Aorta (tissue), 5 donors: ENCODE measurements at regions of chr9 and their contacts with region 1.

Region 1: GRCh38 chr9:34178520-34179212 is at the start of gene UBAP1:
- DNase-seq: peak; percentile 98 to 99
- ATAC-seq: peak; percentile 99
- H3K4me3 ChIP-seq: peak within 1 kb of the TSS; percentile 70 to 79
- H3K27ac ChIP-seq: peak within 1 kb of the TSS; percentile 19 to 72
- H3K4me1 ChIP-seq: peaks cover 0 to 2% of the 10 kb centered on the region in 2 donors
- H3K27me3 ChIP-seq: no peaks in the 10 kb centered on the region
- total RNA-seq, gene UBAP1: 39.3 to 41.9 TPM

Region 2: DNA sequence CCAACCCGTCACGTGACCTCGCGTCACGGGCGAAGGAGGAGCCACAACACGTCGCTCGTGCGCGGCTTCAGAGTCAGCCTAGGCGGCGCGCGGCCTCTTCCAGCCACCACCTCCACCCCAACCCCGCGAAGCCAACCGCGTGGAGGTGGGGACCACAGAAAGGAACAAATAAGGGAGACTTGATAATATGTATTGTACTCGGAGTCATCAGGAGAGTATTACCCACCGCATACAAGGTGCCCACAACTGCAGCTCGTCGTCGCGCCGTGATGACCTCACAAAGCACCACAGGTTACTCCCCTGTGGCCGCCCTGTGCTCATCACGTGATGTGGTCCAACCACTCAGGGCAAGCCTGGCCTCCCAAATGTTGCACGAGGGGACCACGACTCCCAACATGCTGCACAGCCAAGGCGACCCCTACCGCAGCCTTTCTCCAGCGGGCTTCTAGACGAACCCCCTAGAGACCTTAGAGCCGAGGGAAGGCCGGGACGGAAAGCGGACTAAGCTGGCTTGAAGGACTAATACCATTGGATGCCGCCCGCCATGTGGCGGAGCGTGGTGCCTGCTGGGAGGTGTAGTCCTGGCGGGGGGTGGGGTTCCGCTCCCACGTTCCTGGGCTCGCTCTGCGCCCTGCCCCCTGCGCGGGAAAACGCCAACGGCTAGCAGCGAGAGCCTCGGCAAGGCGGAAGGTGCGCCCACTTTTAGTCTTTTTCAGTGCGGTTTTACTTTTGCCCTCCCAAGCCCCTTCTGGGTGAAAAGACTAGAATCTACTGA is 129.6 kb before region 1 on chr9:
- intact Hi-C with region 1: loop called in 1 of 2 experiments (anchors 5 kb)
- DNase-seq: peak; percentile 99 to 100
- ATAC-seq: peak; percentile 98
- H3K4me3 ChIP-seq: peak overlapping the region in 1 of 2 donors; percentile 54
- H3K27ac ChIP-seq: peak overlapping the region in 1 of 2 donors; percentile 87
- H3K4me1 ChIP-seq: no peaks in the 10 kb centered on the region
- H3K27me3 ChIP-seq: no peaks in the 10 kb centered on the region

Region 3: DNA sequence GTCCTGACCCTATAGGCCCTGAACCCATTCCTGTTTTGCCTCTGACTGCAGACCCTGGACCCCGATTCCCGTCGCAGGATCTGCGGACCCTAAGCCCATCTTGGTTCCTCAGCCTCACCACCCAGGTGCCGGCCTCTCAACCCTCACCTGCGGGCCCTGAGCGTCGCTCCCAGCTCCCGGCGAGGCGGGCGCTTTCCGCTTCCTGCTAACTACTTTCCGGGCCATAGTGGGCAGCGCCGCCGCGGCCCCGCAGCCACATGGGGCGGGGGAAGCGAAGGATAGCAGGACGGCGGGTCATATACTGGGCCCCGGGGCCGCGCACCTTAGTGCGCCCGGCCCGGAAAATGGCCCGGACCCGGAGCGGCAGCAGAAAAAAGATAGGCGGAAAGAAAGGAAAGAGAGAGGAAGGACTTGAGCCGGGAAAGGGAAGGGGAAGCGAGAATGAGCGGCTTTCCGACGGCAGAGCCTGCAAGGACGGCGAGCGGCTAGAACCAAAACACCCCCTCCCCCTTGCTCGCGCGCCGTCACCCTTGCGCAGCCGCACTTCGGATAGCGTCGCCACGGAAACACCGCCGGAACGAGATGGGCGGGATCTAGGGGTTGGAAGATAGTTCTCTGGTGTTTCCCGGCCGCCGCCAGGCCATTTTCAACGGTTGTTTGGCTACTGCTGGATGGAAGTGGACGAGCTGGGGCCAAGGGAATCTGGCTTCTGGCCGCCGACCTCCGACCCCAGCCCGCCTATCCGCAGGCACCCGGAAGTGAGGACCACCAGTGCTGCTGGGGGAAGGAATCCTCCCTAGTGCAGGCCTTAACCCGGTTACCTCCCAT is 52.2 kb before region 1 on chr9 and contains the start of gene DCAF12:
- intact Hi-C with region 1: loop called (anchors 5 kb)
- DNase-seq: peak; percentile 95 to 97
- ATAC-seq: peak; percentile 98
- H3K4me3 ChIP-seq: peak within 1 kb of the TSS; percentile 74 to 91
- H3K27ac ChIP-seq: peak within 1 kb of the TSS; percentile 20 to 79
- H3K4me1 ChIP-seq: no peaks in the 10 kb centered on the region
- H3K27me3 ChIP-seq: no peaks in the 10 kb centered on the region
- total RNA-seq, gene DCAF12: 20.6 to 35.2 TPM

Region 4: DNA sequence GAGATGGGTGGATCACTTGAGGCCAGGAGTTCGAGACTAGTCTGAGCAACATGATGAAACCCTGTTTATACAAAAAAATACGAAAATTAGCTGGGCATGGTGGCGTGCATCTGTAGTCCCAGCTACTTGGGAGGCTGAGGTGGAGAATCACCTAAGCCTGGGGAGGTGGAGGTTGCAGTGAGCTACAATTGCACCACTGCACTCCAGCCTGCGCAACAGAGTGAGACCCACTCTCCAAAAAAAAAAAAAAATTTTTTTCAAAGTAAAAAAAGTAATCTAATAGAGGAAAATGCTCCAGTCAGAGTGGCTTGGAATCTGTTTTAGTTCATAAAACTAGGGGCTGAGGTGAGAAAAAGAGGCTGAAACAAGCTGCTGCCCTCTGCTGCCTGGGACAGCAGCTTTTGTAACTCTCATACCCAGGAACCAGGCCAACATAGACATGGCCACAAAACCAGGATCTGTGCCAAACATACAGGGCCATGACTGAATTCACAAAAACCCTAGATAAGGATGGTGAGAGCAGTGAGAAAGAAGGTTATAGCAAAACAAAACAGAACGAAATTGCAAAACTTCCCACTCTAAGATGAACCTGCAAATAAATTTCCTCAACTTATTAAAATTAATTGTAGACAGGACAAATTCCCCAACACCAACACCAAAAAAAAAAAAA is 39.1 kb before region 1 on chr9:
- intact Hi-C with region 1: loop called in 1 of 2 experiments (anchors 2 kb)
- DNase-seq: peak in 1 of 2 donors; percentile 59
- ATAC-seq: peak; percentile 84
- H3K4me3 ChIP-seq: no peak overlapping the region
- H3K27ac ChIP-seq: no peak overlapping the region
- H3K4me1 ChIP-seq: no peaks in the 10 kb centered on the region
- H3K27me3 ChIP-seq: no peaks in the 10 kb centered on the region

Region 5: DNA sequence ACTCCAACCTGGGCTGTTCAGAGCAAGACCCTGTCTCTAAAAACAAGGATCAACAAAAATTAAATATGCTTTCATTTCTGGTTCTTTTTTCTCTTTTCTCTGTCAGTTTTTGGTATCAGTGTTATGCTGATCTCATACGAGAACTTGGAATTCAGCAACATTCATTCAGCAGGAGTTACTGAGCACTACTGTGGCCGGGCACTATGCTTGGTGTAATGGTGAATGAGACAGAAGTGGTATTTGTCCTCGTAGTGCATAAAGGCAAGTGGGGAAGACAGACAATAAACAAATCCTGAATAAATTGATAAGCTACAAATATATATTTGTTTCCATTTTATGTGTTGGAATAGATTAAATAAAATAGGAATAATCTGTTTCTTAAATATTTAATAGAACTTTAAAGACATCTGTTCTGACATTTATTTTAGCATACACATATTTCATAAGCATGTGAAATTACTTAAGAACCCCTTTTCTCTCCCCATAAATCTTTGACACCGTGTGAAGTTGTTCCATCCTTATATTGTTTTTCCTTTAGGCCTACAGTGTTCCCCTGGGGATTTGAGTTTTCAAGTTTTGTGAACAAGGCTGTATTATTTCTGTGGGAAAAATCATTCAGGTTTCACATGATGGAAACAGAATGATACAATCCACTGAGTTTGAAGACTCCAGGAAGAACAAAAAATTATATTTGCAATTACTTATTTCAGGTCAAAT is 24.8 kb after region 1 on chr9:
- intact Hi-C with region 1: no loop called
- DNase-seq: no peak
- ATAC-seq: no peak
- H3K4me3 ChIP-seq: no peak overlapping the region
- H3K27ac ChIP-seq: no peak overlapping the region
- H3K4me1 ChIP-seq: peaks cover 0 to 2% of the 10 kb centered on the region in 2 donors
- H3K27me3 ChIP-seq: no peaks in the 10 kb centered on the region

Region 6: GRCh38 chr9:34252670-34253459 is 74.2 kb after region 1 on chr9:
- intact Hi-C with region 1: loop called (anchors 2 to 5 kb)
- DNase-seq: peak; percentile 63 to 92
- ATAC-seq: peak; percentile 75
- H3K4me3 ChIP-seq: no peak overlapping the region
- H3K27ac ChIP-seq: peak overlapping the region in 1 of 2 donors; percentile 63
- H3K4me1 ChIP-seq: peaks cover 0 to 3% of the 10 kb centered on the region in 2 donors
- H3K27me3 ChIP-seq: no peaks in the 10 kb centered on the region